ENCODE measurements at regions of chr18 and their contacts with region 1.

Region 1: GRCh38 chr18:63518178-63519012 is 23.8 kb upstream of the SERPINB12 start:
- DNase-seq: peak; percentile 64 to 80 (median 71)
- H3K4me3 ChIP-seq: no peak overlapping the region
- H3K4me3 Mint-ChIP-seq: no peak overlapping the region
- H3K27ac ChIP-seq: no peak overlapping the region
- H3K27ac Mint-ChIP-seq: no peak overlapping the region
- H3K4me1 ChIP-seq: no peaks in the 10 kb centered on the region
- H3K4me1 Mint-ChIP-seq: peaks cover 6% of the 10 kb centered on the region
- H3K27me3 ChIP-seq: no peaks in the 10 kb centered on the region
- H3K27me3 Mint-ChIP-seq: peaks cover 0 to 4% (median 1%) of the 10 kb centered on the region in 3 donors
- CTCF ChIP-seq: peak; percentile 82

Region 2: DNA sequence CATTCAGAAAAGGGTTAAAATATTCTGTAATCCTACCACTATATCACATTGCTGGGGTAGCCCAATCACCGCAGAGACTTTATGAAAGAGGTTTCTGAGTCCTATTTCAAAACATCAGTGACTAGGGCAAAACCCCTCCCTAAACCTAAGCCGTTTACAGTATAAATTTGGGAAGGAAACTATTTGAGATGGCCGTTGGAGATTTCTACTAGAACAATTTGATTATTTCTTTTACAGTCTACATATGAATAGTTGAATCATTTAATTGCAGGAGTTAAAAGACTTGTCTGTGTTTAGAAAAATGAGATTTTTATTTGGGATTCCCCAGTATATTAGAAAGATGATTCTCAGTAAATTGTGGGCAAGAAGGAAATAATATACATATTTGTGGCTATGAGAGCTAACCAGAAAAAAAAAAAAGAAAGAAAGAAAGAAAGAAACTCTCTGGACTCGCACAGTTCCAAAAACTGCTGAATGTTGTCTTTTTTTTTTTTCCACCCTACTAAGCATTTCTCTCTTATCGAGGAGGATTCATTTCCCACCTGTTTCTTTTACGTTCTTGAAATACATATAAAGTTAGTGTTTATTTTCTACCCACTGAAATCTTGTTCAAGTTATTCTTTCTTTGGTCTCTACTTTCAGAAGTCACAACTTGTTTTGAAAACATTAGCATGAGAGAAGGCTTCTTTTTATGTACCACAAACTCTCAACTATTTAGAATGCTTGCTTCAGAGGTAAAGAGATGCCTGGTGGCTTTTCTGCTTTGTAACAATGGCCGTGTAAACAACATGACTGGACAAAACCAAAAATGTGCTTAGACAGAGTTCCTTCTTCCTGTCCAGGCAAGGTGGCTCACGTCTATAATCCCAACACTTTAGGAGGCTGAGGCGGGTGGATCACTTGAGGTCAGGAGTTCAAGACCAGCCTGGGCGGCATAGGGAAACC is 264.7 kb before region 1 on chr18:
- intact Hi-C with region 1: no loop called
- DNase-seq: peak; percentile 64 to 85 (median 74)
- H3K4me3 ChIP-seq: peak overlapping the region in 2 of 3 experiments; percentile 38 to 61
- H3K4me3 Mint-ChIP-seq: peak overlapping the region; percentile 51 to 77
- H3K27ac ChIP-seq: peak overlapping the region; percentile 65 to 92
- H3K27ac Mint-ChIP-seq: peak overlapping the region; percentile 88 to 96 (median 93)
- H3K4me1 ChIP-seq: peaks cover 52 to 63% of the 10 kb centered on the region in 2 donors
- H3K4me1 Mint-ChIP-seq: peaks cover 59% of the 10 kb centered on the region
- H3K27me3 ChIP-seq: no peaks in the 10 kb centered on the region
- H3K27me3 Mint-ChIP-seq: no peaks in the 10 kb centered on the region
- CTCF ChIP-seq: no peak

Region 3: DNA sequence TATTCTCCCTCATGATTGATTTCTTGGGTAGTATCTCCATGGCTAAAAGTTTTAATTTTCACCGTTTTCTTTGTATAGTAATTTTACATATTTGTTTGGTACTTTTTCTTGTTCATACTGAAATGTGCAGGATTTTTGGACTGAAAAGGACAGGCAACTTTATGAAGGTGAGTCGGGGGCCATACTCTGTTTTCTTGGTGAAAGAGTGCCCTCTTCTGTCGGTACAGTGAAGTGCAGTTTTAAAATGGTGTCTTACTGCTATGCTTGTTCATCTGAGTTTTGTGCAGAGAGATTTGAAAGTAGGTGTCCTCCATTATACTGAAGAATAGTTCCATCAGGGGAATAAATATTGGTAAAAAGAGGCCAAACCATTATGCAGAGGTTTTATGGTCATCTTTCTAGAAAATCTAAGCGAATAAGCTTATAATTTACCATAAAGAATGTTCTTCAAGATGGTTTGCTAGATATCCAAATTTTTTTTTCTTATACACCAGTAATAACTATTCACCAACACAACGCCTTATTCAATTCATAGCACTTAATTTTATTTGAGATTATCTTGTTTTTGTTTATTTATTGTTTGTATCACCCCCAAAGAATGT is 60.1 kb after region 1 on chr18:
- intact Hi-C with region 1: loop called (anchors 5 to 10 kb)
- DNase-seq: peak in 2 of 3 donors; percentile 34 to 39
- H3K4me3 ChIP-seq: no peak overlapping the region
- H3K4me3 Mint-ChIP-seq: no peak overlapping the region
- H3K27ac ChIP-seq: no peak overlapping the region
- H3K27ac Mint-ChIP-seq: peak overlapping the region in 1 of 7 donors; percentile 19
- H3K4me1 ChIP-seq: peaks cover 20 to 28% of the 10 kb centered on the region in 2 donors
- H3K4me1 Mint-ChIP-seq: peaks cover 9% of the 10 kb centered on the region
- H3K27me3 ChIP-seq: no peaks in the 10 kb centered on the region
- H3K27me3 Mint-ChIP-seq: peaks cover 0 to 5% (median 0%) of the 10 kb centered on the region in 3 donors
- CTCF ChIP-seq: peak; percentile 78

Region 4: DNA sequence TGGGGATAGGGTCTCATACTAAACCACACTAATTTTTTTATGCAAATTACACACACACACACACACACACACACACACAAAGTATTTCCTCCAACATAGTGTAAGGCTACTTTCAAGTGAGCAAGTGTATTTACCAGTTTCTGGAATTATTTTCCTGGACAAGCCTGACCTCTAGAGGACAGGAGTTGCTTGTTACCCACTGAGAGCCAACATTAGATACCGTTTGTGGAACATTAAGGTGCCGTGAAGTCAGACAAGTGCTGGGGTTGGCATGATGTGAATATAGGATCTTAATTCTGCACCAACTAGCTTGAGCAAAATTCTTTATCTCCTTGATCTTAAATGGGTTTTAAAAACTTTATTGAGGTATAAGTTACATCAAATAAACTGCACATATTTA is 329.8 kb after region 1 on chr18:
- intact Hi-C with region 1: loop called (anchors 2 to 5 kb)
- DNase-seq: peak; percentile 38 to 71 (median 63)
- H3K4me3 ChIP-seq: no peak overlapping the region
- H3K4me3 Mint-ChIP-seq: no peak overlapping the region
- H3K27ac ChIP-seq: no peak overlapping the region
- H3K27ac Mint-ChIP-seq: no peak overlapping the region
- H3K4me1 ChIP-seq: peaks cover 6 to 12% of the 10 kb centered on the region in 2 donors
- H3K4me1 Mint-ChIP-seq: peaks cover 9% of the 10 kb centered on the region
- H3K27me3 ChIP-seq: no peaks in the 10 kb centered on the region
- H3K27me3 Mint-ChIP-seq: peaks cover 0 to 2% (median under 1%) of the 10 kb centered on the region in 3 donors
- CTCF ChIP-seq: peak; percentile 59

Region 5: DNA sequence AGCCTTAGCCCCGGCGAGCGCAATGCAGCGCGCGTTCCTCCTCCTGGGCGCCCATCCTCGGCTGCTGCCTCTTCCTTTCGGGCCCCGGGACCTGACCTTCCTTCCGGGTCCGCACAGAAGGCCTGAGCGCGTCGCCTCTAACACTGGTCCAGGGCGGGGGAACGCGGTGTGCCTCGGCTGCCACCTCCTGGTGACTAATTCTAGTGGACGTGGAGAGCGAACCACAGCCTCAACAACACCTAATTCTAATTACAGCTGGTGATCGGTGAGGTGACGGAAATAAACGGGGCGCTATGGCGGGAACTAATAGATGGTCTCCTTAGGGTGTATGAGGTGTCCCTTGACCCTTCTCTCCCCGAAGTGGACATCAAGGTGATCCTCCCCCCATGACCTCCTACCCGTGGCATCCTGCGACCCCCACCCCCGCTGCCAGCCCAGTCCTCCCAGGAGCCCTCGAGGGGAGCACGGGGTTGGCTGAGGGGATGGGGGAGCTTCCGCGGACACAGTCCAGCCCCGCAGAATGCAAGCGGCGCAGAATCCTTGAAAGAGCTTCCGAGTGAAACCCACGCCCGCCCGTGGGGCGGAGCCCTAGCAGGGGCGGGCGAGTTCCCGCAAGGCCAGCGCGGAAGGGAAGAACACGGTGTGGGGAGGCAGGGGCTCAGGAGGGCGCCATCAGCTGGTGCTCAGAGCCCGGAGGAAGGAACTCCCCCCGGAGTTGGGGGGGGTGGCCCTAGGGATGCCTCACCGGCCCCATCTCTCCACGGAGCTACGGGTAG is 417.9 kb after region 1 on chr18:
- intact Hi-C with region 1: loop called (anchors 10 kb)
- DNase-seq: peak; percentile 87 to 91 (median 91)
- H3K4me3 ChIP-seq: peak overlapping the region; percentile 73 to 87 (median 74)
- H3K4me3 Mint-ChIP-seq: no peak overlapping the region
- H3K27ac ChIP-seq: peak overlapping the region; percentile 78 to 89
- H3K27ac Mint-ChIP-seq: peak overlapping the region in 6 of 7 donors; percentile 59 to 90 (median 86)
- H3K4me1 ChIP-seq: peaks cover 19 to 27% of the 10 kb centered on the region in 2 donors
- H3K4me1 Mint-ChIP-seq: peaks cover 7% of the 10 kb centered on the region
- H3K27me3 ChIP-seq: no peaks in the 10 kb centered on the region
- H3K27me3 Mint-ChIP-seq: peaks cover 0 to under 1% (median 0%) of the 10 kb centered on the region in 3 donors
- CTCF ChIP-seq: peak; percentile 81

Region 6: DNA sequence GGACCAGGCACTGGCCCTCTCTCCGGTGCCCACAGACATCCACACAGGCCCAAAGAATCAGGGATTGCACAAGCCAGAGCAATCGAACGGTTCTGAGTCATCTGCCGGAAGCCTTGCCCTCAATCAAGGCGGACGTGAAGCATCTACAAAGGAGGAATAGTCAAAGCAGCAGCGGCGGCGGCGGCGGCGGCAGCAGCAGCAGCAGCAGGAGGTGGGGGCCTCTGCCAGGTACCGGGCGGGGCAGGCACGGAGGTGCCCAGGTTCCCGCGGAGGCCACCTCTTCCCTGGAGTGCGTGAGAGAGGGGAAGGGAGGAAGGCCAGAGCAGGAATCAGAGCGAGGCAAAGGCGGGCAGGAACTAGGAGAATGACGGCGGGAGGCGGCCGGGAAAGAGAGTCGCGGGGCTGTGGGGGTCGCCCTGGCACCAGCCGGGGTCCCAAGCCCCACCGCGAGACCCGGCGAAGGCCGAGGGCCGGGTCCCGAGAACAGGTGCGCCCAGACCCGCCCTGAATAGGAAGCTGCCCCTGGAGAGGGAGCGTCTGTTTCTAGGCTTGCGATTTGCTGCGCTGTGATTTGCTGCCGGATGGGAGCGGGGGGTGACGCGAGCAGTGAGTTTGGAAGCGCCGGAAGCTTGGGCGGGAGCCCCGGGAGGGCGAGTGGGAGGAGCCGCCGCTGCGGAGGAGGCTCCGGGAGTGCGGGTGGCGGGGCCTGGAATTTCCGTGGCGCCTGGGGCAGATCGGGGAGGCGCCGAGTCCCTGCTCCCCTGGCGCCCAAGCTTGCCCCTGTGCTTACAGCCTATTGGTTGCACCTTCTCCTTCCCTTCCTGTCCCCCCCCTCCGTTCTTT is 451.8 kb after region 1 on chr18 and contains the start of gene SERPINB8:
- intact Hi-C with region 1: loop called in 1 of 2 experiments (anchors 10 kb)
- DNase-seq: peak; percentile 92 to 97 (median 96)
- H3K4me3 ChIP-seq: peak within 1 kb of the TSS; percentile 55 to 94 (median 81)
- H3K4me3 Mint-ChIP-seq: peak within 1 kb of the TSS; percentile 91 to 98
- H3K27ac ChIP-seq: peak within 1 kb of the TSS; percentile 95 to 98
- H3K27ac Mint-ChIP-seq: peak within 1 kb of the TSS; percentile 95 to 99 (median 98)
- H3K4me1 ChIP-seq: peaks cover 64 to 67% of the 10 kb centered on the region in 2 donors
- H3K4me1 Mint-ChIP-seq: peaks cover 82% of the 10 kb centered on the region
- H3K27me3 ChIP-seq: no peaks in the 10 kb centered on the region
- H3K27me3 Mint-ChIP-seq: peaks cover 0 to 2% (median 0%) of the 10 kb centered on the region in 3 donors
- CTCF ChIP-seq: no peak
- polyA plus RNA-seq, gene SERPINB8: 30.3 to 141 (median 115) TPM